Activated T-helper 1 cell treated with anti-CD3 and anti-CD28 coated beads, Interleukin-12 subunit alpha, Interleukin-12 subunit beta, Interleukin-2, Interleukin-4 antibody, amounts not matched to agents 30 ng/mL and 10 ng/mL and 1 ng/mL, durations not matched to agents 14 hours and 24 hours and 36 hours (primary cell): ENCODE measurements at regions of chr1 and their contacts with region 1.

Region 1: DNA sequence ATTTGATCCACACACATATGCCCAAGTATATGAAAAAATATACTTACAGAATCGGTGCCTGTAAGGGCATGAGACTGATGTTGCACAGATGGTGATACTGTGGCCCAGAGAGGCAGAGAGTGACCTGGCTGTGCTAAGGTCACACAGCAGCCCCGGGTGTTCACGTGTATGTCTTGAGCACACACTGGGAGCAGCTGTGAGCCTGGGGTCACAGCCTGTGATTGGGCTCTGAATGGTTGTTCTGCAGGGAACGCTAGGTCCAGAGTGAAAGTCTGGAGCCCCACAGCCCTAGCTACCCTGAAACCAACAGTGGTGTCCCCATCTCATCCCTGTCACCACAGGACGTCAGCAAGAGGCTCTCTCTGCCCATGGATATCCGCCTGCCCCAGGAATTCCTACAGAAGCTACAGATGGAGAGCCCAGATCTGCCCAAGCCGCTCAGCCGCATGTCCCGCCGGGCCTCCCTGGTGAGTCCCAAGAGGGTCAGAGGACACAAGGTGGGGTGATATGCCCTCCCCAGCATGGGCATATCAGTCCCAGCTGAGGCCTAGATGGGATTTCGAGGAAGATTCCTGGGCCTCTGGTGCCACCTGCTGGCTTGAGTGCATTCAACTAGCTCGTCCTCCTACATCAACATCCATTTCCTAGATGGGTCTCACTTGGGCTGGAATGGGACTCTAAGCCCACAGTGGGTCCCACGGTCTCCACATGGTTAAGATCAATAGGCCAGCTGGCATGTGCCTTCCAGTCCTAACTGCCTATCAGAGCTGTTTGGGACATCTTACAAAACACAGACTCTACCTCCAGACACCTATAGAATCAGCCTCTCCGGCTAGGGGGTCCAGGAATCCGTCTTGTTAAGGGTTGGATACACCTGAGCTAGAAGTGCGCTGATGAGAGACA is 19.7 kb downstream of the CDK18 start:
- DNase-seq: peak; percentile 45
- H3K4me3 Mint-ChIP-seq: no peak overlapping the region
- H3K27ac Mint-ChIP-seq: no peak overlapping the region
- H3K4me1 Mint-ChIP-seq: no peaks in the 10 kb centered on the region
- H3K27me3 Mint-ChIP-seq: peaks cover 3% of the 10 kb centered on the region

Region 2: GRCh38 chr1:205396967-205397616 is 127.0 kb before region 1 on chr1:
- intact Hi-C with region 1: loop called (anchors 1 kb)
- DNase-seq: no peak
- H3K4me3 Mint-ChIP-seq: no peak overlapping the region
- H3K27ac Mint-ChIP-seq: no peak overlapping the region
- H3K4me1 Mint-ChIP-seq: no peaks in the 10 kb centered on the region
- H3K27me3 Mint-ChIP-seq: peaks cover 25% of the 10 kb centered on the region

Region 3: DNA sequence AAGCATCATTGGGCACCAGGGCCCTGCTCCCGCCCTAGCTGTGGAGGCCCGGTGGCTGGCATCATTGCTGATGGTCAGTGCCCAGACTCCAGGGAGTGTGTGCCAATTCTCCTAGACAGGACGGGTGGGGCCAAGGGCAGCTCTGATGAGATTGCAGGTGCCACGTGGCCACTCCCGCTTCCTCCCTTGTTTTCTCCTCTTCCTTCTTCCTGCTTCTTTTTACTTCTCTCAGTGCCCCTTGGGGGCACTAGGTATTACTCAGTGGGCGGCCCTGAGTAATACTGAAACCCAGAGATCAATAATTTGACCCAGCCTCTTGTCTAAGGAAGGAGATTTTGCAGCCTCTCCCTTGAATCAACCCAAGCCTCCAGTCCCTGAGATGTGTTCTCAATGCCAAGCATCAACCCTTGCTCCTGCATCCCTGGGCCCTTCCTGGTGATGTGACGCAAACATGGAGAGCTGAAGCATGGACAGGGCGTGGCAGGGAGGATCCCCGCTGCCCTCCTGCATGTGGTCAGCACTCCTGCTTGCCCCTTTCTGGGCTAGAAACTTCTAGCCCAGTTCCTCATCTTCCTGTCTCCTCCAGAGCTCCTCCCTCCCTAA is 12.7 kb after region 1 on chr1:
- intact Hi-C with region 1: no loop called
- DNase-seq: no peak
- H3K4me3 Mint-ChIP-seq: no peak overlapping the region
- H3K27ac Mint-ChIP-seq: no peak overlapping the region
- H3K4me1 Mint-ChIP-seq: peaks cover 9% of the 10 kb centered on the region
- H3K27me3 Mint-ChIP-seq: peaks cover 10% of the 10 kb centered on the region